Tibial artery (tissue), 4 donors: ENCODE measurements at regions of chr15 and their contacts with region 1.

Region 1: DNA sequence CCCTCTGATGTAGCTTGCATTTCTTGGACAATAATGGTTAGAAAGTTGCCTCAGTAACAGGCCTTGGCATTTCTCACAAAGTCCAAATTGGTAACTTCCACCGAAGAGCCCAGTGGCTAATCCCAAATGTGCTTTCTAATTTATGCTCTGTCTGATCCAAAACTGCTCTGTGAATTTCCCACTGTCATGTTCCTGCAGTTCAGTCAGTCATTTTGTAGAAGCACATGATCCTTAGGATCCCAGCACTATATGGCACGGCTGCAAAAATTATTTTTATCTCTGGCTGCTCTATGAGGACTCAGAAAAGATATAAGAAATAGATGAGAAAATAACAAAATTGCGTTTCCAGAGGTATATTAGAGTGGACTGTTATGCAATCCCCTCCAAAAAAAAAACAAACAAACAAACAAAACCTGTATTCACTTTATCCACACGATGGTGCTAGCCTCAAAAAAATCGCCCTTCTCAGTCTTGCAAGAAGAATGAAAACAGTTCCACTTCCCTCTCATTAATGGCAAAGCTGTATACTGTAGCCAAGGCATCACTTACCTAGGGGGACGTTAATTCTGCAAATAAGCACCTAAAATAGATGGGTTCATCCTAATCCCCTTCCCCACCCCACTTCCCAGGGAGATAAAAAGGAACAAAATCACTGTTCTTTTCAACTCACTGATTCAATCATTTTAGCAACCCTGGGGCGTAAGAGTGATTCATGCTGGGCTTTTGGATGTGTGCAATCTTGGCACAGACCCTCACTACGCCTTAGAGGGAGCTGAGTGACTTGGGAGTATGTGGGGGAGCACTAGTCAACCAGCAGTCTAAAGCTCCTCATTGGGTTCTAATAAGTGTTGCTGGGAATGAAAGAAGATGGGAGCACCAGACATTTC is 61.3 kb downstream of the TMCO5A start:
- DNase-seq: no peak
- H3K4me3 ChIP-seq: no peak overlapping the region
- H3K27ac ChIP-seq: no peak overlapping the region
- H3K4me1 ChIP-seq: peaks cover 0 to 4% (median 0%) of the 10 kb centered on the region in 4 donors
- H3K27me3 ChIP-seq: no peaks in the 10 kb centered on the region
- CTCF ChIP-seq: peak; percentile 59 to 70

Region 2: GRCh38 chr15:38354315-38354929 is 358.7 kb after region 1 on chr15:
- intact Hi-C with region 1: loop called (anchors 5 kb)
- DNase-seq: peak; percentile 67 to 68
- H3K4me3 ChIP-seq: no peak overlapping the region
- H3K27ac ChIP-seq: no peak overlapping the region
- H3K4me1 ChIP-seq: peaks cover 0 to 4% (median 0%) of the 10 kb centered on the region in 4 donors
- H3K27me3 ChIP-seq: no peaks in the 10 kb centered on the region
- CTCF ChIP-seq: peak; percentile 70 to 75

Region 3: GRCh38 chr15:38414357-38414756 is 418.7 kb after region 1 on chr15:
- intact Hi-C with region 1: loop called (anchors 10 kb)
- DNase-seq: peak; percentile 67 to 79
- H3K4me3 ChIP-seq: no peak overlapping the region
- H3K27ac ChIP-seq: no peak overlapping the region
- H3K4me1 ChIP-seq: no peaks in the 10 kb centered on the region
- H3K27me3 ChIP-seq: no peaks in the 10 kb centered on the region
- CTCF ChIP-seq: peak; percentile 67 to 77